ENCODE measurements at regions of chr6 and their contacts with region 1.

Region 1: DNA sequence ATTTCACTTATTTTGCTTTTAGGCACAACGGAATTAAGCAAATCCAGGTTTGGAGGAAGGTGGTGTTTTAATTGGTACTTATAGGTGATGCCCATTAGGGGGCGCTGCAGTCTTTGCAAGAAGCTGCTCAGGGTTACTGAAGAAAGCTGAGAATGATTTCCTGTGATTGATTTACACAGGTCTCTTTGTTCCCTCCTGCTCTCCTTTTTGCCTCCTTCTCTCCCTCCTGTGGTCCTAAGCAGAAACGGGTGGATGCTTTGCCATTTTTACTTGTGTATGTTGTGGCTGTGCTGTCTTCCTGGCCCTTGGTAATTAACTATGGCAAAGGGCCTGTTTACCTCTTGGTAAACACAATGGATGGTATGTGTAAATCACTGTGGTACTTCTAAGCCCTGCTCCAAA is 97.8 kb downstream of the ANKS1A start:
- DNase-seq: peak; percentile 69
- H3K4me3 ChIP-seq: no peak overlapping the region
- H3K27ac ChIP-seq: no peak overlapping the region
- H3K4me1 ChIP-seq: no peaks in the 10 kb centered on the region
- H3K27me3 ChIP-seq: no peaks in the 10 kb centered on the region
- CTCF ChIP-seq: peak; percentile 47 to 94 (median 88)
- POLR2A ChIP-seq: no peak

Region 2: DNA sequence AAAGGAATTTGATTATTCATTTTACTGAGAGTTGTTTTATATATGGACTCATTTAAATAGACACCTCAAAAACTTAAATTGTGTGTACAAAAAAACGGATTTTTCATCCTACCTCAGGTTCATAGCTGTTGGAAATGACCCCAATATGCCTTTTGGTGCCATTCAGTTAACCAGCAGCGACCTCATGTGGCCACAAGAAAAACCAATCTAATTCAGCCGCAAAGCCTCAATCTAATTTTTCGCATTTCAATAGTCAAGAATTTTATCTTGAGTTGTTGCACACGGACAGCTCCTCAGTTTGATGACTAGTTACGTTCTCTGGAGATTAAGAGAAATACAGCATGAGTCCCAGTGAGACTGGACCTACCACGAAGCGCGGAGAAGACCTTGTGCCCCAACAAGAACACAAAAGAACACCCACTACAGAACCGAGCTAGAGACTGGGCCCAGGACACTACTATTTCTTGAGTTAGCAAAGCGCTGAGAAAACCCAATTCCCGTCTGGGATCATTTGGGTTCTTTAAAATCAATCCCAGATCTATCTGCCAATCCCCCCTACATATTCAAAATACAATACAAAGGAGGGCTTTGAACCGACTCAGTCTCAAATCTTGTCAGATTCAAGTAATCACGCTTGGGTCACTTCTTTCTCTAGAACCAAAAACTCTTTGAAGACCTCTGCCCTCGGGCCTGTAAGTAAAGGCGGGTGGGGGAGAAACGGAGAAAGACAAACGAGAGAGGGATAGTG is 153.2 kb after region 1 on chr6:
- intact Hi-C with region 1: loop called (anchors 1 kb)
- DNase-seq: peak; percentile 24
- H3K4me3 ChIP-seq: no peak overlapping the region
- H3K27ac ChIP-seq: no peak overlapping the region
- H3K4me1 ChIP-seq: no peaks in the 10 kb centered on the region
- H3K27me3 ChIP-seq: no peaks in the 10 kb centered on the region
- CTCF ChIP-seq: peak; percentile 41 to 88 (median 78)
- POLR2A ChIP-seq: no peak

Region 3: DNA sequence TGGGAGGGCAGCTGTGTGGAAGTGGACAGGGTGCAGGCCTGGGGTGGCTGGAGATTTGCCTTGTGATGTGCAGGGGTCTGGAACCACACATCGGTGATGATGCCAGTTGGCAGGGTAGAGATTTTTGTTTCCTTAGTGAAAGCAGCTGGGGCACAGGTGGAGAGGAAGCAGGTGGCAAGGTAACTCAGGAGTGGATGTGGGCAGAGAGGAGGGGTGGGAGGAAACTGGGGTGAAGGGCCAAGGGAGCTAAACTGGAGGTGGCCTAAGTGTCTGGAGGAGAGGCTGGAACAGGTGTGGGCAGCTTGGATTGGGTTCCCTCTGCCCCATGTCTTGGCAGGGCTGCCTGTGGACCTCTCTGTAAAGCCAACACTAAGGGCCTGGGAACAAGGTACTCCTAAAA is 222.2 kb after region 1 on chr6:
- intact Hi-C with region 1: loop called (anchors 5 kb)
- DNase-seq: no peak
- H3K4me3 ChIP-seq: no peak overlapping the region
- H3K27ac ChIP-seq: no peak overlapping the region
- H3K4me1 ChIP-seq: no peaks in the 10 kb centered on the region
- H3K27me3 ChIP-seq: no peaks in the 10 kb centered on the region
- CTCF ChIP-seq: no peak
- POLR2A ChIP-seq: no peak

Region 4: GRCh38 chr6:35240840-35241801 is 254.3 kb after region 1 on chr6:
- intact Hi-C with region 1: loop called (anchors 5 kb)
- DNase-seq: peak; percentile 68
- H3K4me3 ChIP-seq: no peak overlapping the region
- H3K27ac ChIP-seq: no peak overlapping the region
- H3K4me1 ChIP-seq: peaks cover 4% of the 10 kb centered on the region
- H3K27me3 ChIP-seq: no peaks in the 10 kb centered on the region
- CTCF ChIP-seq: peak; percentile 87 to 94 (median 94)
- POLR2A ChIP-seq: no peak

Measured in prostate gland (tissue), 2 donors.